Right ventricle myocardium superior (tissue), 1 donor: ENCODE measurements at regions of chr1 and their contacts with region 1.

Region 1: DNA sequence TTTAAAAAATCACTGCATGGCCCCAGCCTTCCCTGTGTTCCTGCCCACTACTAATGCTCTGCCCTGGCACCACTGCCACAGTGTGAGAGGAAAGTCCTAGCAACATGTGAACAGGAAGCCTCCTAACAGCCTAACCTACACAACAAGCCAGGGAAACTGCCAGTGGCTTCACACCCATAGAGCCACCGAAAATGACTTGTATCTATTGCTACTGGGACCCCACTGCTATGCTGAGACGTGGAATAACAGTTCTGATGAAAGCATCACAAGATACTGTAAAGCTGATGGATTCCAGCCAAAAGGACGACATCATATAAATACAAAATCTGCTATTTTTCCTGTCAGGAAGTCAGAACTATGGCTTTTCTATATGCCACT is 74.9 kb downstream of the JAK1 start:
- DNase-seq: no peak
- ATAC-seq: peak; percentile 65

Region 2: GRCh38 chr1:64433747-64434146 is 457.7 kb before region 1 on chr1:
- intact Hi-C with region 1: no loop called
- DNase-seq: no peak
- ATAC-seq: no peak

Region 3: GRCh38 chr1:64811131-64811530 is 80.3 kb before region 1 on chr1:
- intact Hi-C with region 1: no loop called
- DNase-seq: no peak
- ATAC-seq: no peak

Region 4: DNA sequence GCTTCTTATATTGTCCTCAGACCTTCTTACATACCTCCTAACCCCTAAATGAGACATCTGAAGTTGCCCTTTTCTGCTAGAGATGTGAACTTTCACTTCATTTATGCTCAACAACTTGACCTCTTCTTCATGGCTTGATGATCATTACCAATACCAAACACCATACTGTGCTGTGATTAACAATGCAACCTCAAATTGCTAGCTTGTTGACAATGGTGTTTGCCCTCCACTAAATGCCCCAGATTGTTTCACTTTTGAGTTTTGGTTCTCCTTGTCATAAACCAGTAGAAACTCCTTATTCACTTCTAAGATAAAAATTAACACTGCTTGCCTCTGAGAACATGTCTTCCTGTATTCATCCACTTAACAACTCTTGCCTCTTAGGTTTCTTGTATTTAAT is 69.3 kb after region 1 on chr1:
- intact Hi-C with region 1: loop called (anchors 5 kb)
- DNase-seq: no peak
- ATAC-seq: no peak